ENCODE measurements at regions of chr22 and their contacts with region 1.

Region 1: GRCh38 chr22:29606320-29606719 is 2.9 kb downstream of the NF2 start:
- DNase-seq: no peak
- H3K4me3 ChIP-seq: no peak overlapping the region
- H3K27ac ChIP-seq: no peak overlapping the region
- H3K4me1 ChIP-seq: peaks cover 7 to 20% (median 16%) of the 10 kb centered on the region in 4 experiments
- H3K27me3 ChIP-seq: no peaks in the 10 kb centered on the region

Region 2: GRCh38 chr22:29625090-29625825 is 18.9 kb after region 1 on chr22:
- CTCF ChIA-PET with region 1: interaction called, 17 read pairs
- POLR2A ChIA-PET with region 1: no interaction called
- DNase-seq: peak; percentile 47 to 74 (median 73)
- H3K4me3 ChIP-seq: no peak overlapping the region
- H3K27ac ChIP-seq: no peak overlapping the region
- H3K4me1 ChIP-seq: peaks cover 5 to 20% (median 14%) of the 10 kb centered on the region in 4 experiments
- H3K27me3 ChIP-seq: no peaks in the 10 kb centered on the region